Caco-2 (cell line): ENCODE measurements at regions of chr5 and their contacts with region 1.

Region 1: DNA sequence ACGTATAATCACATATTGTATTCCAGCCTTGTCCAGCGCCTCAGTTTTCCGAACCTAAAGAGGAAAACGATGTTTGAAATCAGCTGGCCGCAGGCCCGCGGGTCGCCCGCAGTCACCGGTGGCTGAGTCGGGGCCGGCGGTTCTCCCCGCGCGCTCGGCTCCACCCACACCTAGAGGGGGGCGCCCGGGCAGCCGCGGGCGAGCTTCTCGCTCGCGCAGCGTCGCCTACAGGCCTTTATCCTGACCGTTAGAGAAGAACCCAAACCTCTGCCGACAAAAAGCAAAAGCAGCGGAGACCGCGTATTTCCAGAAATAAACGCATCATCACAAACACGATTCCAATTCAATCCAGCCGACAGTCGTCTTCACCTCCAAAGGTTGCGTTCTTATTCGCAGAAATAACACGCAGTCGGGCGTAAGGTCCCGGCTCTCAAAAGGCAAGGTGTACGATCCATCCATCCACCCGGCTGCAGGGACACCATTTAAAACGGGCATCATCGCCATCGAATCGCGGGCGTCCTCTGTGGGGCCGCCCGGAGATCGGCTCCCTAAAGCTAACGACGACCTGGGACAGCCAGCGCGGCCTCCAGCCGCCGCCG is 680 bp upstream of the NIPBL start:
- DNase-seq: peak; percentile 78 to 82
- H3K4me3 ChIP-seq: peak overlapping the region; percentile 52
- H3K4me3 Mint-ChIP-seq: peak overlapping the region; percentile 93
- H3K27ac Mint-ChIP-seq: peak overlapping the region; percentile 95
- H3K4me1 ChIP-seq: peaks cover 30% of the 10 kb centered on the region
- H3K4me1 Mint-ChIP-seq: peaks cover 13% of the 10 kb centered on the region
- H3K27me3 ChIP-seq: no peaks in the 10 kb centered on the region
- H3K27me3 Mint-ChIP-seq: no peaks in the 10 kb centered on the region
- CTCF ChIP-seq: peak in 1 of 2 experiments; percentile 64

Region 2: DNA sequence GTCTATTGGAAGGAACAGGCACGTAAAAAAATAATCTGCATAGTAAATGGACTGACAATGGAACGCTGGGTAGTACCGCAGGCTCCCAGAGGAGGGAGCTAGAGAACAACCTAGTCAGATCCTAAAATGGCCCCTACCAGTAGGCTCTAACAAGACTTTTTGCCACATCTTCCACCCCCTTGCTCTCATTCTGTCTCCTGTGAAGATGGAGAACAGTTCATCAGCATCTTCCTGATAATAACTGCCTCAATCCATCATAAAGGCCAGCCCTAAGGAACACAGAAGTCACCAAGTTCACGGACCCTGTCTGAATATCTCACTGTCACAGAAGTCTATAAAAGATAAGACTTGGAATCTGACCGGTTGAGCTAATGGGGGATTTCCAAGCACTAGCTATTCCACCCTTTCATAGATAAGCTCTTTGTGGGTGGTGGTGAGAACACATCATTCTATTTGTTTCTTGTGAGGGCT is 136.1 kb before region 1 on chr5:
- CTCF ChIA-PET with region 1: interaction called, 16 read pairs
- POLR2A ChIA-PET with region 1: interaction called, 4 read pairs
- intact Hi-C with region 1: loop called (anchors 1 kb)
- DNase-seq: peak; percentile 78 to 86
- H3K4me3 ChIP-seq: no peak overlapping the region
- H3K4me3 Mint-ChIP-seq: peak overlapping the region; percentile 46
- H3K27ac Mint-ChIP-seq: no peak overlapping the region
- H3K4me1 ChIP-seq: peaks cover 12% of the 10 kb centered on the region
- H3K4me1 Mint-ChIP-seq: peaks cover 19% of the 10 kb centered on the region
- H3K27me3 ChIP-seq: no peaks in the 10 kb centered on the region
- H3K27me3 Mint-ChIP-seq: peaks cover 5% of the 10 kb centered on the region
- CTCF ChIP-seq: peak; percentile 91 to 94

Region 3: DNA sequence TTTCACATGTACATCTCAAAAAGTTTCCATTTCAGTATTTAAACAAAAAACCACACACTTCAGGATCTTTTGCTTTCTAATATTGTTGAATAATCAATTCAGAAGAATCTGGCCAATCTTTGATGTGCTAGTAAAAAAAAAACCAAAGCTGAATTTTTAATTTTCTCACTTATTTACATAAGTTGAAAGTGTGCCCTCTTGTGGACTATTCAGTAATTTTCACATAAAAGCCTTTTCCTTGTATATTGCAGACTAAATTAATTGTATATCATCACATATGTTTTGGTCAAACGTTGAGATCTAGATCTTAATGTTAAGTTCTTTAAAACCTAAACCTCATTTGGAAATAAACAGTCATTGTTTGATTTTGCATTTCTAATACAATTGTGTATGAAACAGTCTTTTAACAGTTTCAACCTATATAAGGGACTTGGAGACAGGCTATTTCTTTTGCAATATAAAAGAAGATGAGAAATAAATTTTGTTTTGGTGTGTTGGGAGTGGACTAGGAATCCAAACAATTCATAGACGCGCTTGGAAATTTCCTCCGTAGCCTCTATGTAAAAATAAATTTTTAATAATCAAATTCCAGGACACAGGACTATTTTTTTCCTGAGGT is 68.8 kb after region 1 on chr5:
- CTCF ChIA-PET with region 1: interaction called, 3 read pairs
- POLR2A ChIA-PET with region 1: no interaction called
- intact Hi-C with region 1: loop called (anchors 2 kb)
- DNase-seq: peak in 1 of 2 experiments; percentile 30
- H3K4me3 ChIP-seq: no peak overlapping the region
- H3K4me3 Mint-ChIP-seq: no peak overlapping the region
- H3K27ac Mint-ChIP-seq: no peak overlapping the region
- H3K4me1 ChIP-seq: peaks cover under 1% of the 10 kb centered on the region; the same call in 1 of the 2 replicates
- H3K4me1 Mint-ChIP-seq: peaks cover 18% of the 10 kb centered on the region
- H3K27me3 ChIP-seq: no peaks in the 10 kb centered on the region
- H3K27me3 Mint-ChIP-seq: no peaks in the 10 kb centered on the region
- CTCF ChIP-seq: peak; percentile 48 to 64

Region 4: DNA sequence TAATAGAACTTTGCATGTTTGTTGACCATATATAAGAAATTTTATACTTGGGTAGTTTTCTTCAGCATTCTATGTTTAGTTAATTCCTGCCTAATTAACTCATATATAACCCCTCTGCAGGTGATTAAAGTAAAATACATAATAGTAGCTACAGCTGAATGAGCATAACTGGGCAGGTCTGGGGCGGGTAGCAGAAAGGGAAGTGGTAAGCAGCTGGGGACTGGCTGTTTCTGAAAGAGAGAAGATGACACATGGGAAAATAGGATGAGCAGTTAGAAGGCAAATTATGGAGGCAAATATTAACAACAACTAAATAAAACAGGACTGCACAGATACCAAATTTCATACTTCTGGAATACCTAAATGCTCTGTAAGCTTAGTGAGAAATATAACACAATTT is 245.1 kb after region 1 on chr5:
- CTCF ChIA-PET with region 1: no interaction called
- POLR2A ChIA-PET with region 1: no interaction called
- intact Hi-C with region 1: loop called (anchors 10 kb)
- DNase-seq: no peak
- H3K4me3 ChIP-seq: no peak overlapping the region
- H3K4me3 Mint-ChIP-seq: no peak overlapping the region
- H3K27ac Mint-ChIP-seq: no peak overlapping the region
- H3K4me1 ChIP-seq: no peaks in the 10 kb centered on the region
- H3K4me1 Mint-ChIP-seq: peaks cover 9% of the 10 kb centered on the region
- H3K27me3 ChIP-seq: no peaks in the 10 kb centered on the region
- H3K27me3 Mint-ChIP-seq: no peaks in the 10 kb centered on the region
- CTCF ChIP-seq: no peak